ENCODE measurements at regions of chr17 and their contacts with region 1.

Region 1: GRCh38 chr17:60036796-60037612 is 41.7 kb downstream of the HEATR6 start:
- DNase-seq: peak; percentile 87

Region 2: GRCh38 chr17:59964482-59965328 is 72.3 kb before region 1 on chr17 and contains the start of gene RNFT1:
- intact Hi-C with region 1: loop called in 1 of 2 experiments (anchors 10 kb)
- DNase-seq: peak; percentile 97
- total RNA-seq, gene RNFT1: 12.9 to 13.6 TPM

Region 3: GRCh38 chr17:60135151-60135950 is 98.3 kb after region 1 on chr17:
- intact Hi-C with region 1: no loop called
- DNase-seq: peak; percentile 96

Region 4: DNA sequence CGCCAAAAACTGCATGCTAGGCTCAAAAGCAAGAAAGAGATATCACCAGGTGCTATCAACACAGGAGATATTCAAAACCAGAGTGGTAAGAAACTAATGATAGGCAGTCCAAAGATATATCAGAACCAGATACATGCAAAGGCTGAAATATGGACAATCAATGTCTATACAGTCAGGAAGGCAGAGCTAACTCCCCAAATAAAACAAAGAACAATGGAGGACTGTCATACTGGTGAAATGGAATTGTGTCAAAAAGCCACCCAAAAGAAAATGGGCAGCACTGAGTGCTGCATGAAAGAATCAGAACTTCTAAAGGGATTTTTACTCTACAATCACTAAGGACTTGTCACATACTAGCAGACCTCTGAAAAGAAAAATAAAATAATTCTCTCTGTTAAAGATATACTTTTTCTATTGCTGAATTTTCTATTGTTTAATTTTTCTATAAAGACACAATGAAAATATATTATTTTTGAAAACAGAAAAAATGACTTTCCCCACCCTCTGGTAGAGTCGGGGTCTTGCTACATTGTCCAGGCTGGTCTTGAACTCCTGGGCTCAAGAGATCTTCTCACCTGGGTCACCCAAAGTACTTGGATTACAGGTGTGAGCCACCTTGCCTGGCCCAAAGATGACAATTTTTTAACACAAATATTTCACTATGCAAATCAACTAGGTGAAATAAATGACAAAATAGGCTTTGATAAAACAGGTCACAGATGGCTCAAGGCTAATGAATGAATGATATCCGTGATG is 256.8 kb after region 1 on chr17:
- intact Hi-C with region 1: no loop called
- DNase-seq: no peak

Measured in posterior vena cava (tissue), 2 donors.